ENCODE measurements at regions of chr3 and their contacts with region 1.

Region 1: GRCh38 chr3:62622553-62623193 is 249.3 kb upstream of the FEZF2 start:
- DNase-seq: peak; percentile 40
- H3K4me3 ChIP-seq: no peak overlapping the region
- H3K27ac ChIP-seq: no peak overlapping the region
- H3K4me1 ChIP-seq: no peaks in the 10 kb centered on the region
- H3K27me3 ChIP-seq: no peaks in the 10 kb centered on the region
- CTCF ChIP-seq: peak; percentile 52 to 74

Region 2: GRCh38 chr3:63193629-63194028 is 571.0 kb after region 1 on chr3:
- CTCF ChIA-PET with region 1: no interaction called
- dilution Hi-C with region 1: no loop called
- in situ Hi-C with region 1: no loop called
- intact Hi-C with region 1: loop called (anchors 1 kb)
- DNase-seq: peak; percentile 9
- H3K4me3 ChIP-seq: no peak overlapping the region
- H3K27ac ChIP-seq: no peak overlapping the region
- H3K4me1 ChIP-seq: no peaks in the 10 kb centered on the region
- H3K27me3 ChIP-seq: peaks cover 3% of the 10 kb centered on the region
- CTCF ChIP-seq: peak; percentile 34 to 65

Region 3: GRCh38 chr3:63228087-63229023 is 605.7 kb after region 1 on chr3:
- CTCF ChIA-PET with region 1: no interaction called
- dilution Hi-C with region 1: no loop called
- in situ Hi-C with region 1: no loop called
- intact Hi-C with region 1: loop called (anchors 1 kb)
- DNase-seq: peak; percentile 33
- H3K4me3 ChIP-seq: no peak overlapping the region
- H3K27ac ChIP-seq: no peak overlapping the region
- H3K4me1 ChIP-seq: no peaks in the 10 kb centered on the region
- H3K27me3 ChIP-seq: no peaks in the 10 kb centered on the region
- CTCF ChIP-seq: peak; percentile 62 to 74

Region 4: GRCh38 chr3:63333842-63334241 is 711.2 kb after region 1 on chr3:
- CTCF ChIA-PET with region 1: no interaction called
- dilution Hi-C with region 1: no loop called
- in situ Hi-C with region 1: no loop called
- intact Hi-C with region 1: loop called (anchors 2 kb)
- DNase-seq: no peak
- H3K4me3 ChIP-seq: no peak overlapping the region
- H3K27ac ChIP-seq: no peak overlapping the region
- H3K4me1 ChIP-seq: no peaks in the 10 kb centered on the region
- H3K27me3 ChIP-seq: peaks cover 2% of the 10 kb centered on the region
- CTCF ChIP-seq: peak; percentile 18 to 34

Measured in mammary epithelial cell (primary cell).